Right lobe of liver (tissue), 6 donors: ENCODE measurements at regions of chr4 and their contacts with region 1.

Region 1: DNA sequence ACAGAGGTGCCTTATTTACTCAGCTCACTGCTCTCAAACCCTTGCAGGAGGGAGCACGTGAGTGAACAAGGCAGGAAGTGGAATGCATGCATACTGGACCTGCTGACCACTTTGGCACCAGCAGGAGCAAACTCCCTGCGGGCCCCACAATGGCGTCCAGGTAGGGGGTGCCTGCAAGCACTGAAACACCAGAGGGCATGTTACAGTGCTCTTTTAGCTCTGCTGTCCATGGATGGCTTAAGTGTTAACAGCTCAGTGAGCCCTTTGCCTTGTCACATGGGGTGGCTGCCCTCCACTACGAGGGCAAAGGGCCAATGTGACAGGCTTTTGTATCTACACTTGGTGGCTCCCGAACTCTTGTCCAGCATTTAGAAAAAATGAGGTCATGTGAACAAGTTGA is 199.5 kb upstream of the UGT8 start:
- DNase-seq: no peak
- ATAC-seq: no peak
- H3K4me3 ChIP-seq: no peak overlapping the region
- H3K27ac ChIP-seq: no peak overlapping the region
- H3K4me1 ChIP-seq: no peaks in the 10 kb centered on the region
- H3K27me3 ChIP-seq: no peaks in the 10 kb centered on the region
- CTCF ChIP-seq: no peak
- POLR2A ChIP-seq: no peak

Region 2: GRCh38 chr4:114442856-114443255 is 43.8 kb after region 1 on chr4:
- intact Hi-C with region 1: no loop called
- DNase-seq: no peak
- ATAC-seq: no peak
- H3K4me3 ChIP-seq: no peak overlapping the region
- H3K27ac ChIP-seq: no peak overlapping the region
- H3K4me1 ChIP-seq: no peaks in the 10 kb centered on the region
- H3K27me3 ChIP-seq: no peaks in the 10 kb centered on the region
- CTCF ChIP-seq: no peak
- POLR2A ChIP-seq: no peak

Region 3: DNA sequence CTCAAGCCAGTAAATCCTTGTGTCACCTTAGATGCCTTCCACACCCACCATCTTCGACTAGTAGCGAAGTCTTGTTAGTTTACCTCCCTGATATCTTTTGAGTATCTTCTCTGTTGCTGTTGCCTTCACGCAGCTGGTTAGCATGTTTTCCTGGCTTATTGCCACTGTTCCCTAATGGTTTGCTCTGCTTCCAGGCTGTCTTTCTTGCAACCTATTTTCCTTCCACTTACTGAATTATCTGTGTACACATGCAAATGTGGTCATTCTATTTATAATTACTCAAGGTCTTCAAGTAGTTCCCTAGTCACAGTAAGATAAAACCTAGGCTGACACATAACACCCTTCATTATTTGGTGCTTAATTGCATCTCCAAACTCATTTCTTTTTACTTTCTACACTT is 289.0 kb after region 1 on chr4:
- intact Hi-C with region 1: loop called in 1 of 2 experiments (anchors 10 kb)
- DNase-seq: no peak
- ATAC-seq: no peak
- H3K4me3 ChIP-seq: no peak overlapping the region
- H3K27ac ChIP-seq: no peak overlapping the region
- H3K4me1 ChIP-seq: no peaks in the 10 kb centered on the region
- H3K27me3 ChIP-seq: no peaks in the 10 kb centered on the region
- CTCF ChIP-seq: no peak
- POLR2A ChIP-seq: no peak